ENCODE measurements at regions of chr12 and their contacts with region 1.

Region 1: GRCh38 chr12:27733052-27733656 is 22.5 kb downstream of the MRPS35 start:
- DNase-seq: peak in 2 of 10 donors; percentile 30 to 36
- H3K4me3 ChIP-seq: no peak overlapping the region
- H3K27ac ChIP-seq: no peak overlapping the region
- H3K27me3 ChIP-seq: no peaks in the 10 kb centered on the region
- CTCF ChIP-seq: peak; percentile 34 to 87 (median 75)

Region 2: GRCh38 chr12:27779920-27780611 is 46.9 kb after region 1 on chr12 and contains the starts of genes KLHL42 and MANSC4:
- intact Hi-C with region 1: loop called in 1 of 2 experiments (anchors 5 kb)
- DNase-seq: peak; percentile 40 to 81 (median 60)
- H3K4me3 ChIP-seq: peak within 1 kb of the TSS; percentile 52 to 95 (median 85)
- H3K27ac ChIP-seq: peak within 1 kb of the TSS; percentile 78 to 99 (median 96)
- H3K27me3 ChIP-seq: no peaks in the 10 kb centered on the region
- CTCF ChIP-seq: peak in 14 of 56 donors; percentile 9 to 35 (median 24)
- total RNA-seq, gene KLHL42: 40.7 to 73.4 (median 58.0) TPM
- total RNA-seq, gene MANSC4: 0.42 to 1.2 (median 0.61) TPM in 14 of 120 experiments, not detected in the others

Region 3: GRCh38 chr12:27821259-27821973 is 88.3 kb after region 1 on chr12:
- intact Hi-C with region 1: loop called (anchors 2 to 5 kb)
- DNase-seq: peak in 1 of 10 donors; percentile 14
- H3K4me3 ChIP-seq: peak overlapping the region in 13 of 59 donors; percentile 2 to 49 (median 25)
- H3K27ac ChIP-seq: no peak overlapping the region
- H3K27me3 ChIP-seq: no peaks in the 10 kb centered on the region
- CTCF ChIP-seq: peak; percentile 65 to 91 (median 82)

Region 4: DNA sequence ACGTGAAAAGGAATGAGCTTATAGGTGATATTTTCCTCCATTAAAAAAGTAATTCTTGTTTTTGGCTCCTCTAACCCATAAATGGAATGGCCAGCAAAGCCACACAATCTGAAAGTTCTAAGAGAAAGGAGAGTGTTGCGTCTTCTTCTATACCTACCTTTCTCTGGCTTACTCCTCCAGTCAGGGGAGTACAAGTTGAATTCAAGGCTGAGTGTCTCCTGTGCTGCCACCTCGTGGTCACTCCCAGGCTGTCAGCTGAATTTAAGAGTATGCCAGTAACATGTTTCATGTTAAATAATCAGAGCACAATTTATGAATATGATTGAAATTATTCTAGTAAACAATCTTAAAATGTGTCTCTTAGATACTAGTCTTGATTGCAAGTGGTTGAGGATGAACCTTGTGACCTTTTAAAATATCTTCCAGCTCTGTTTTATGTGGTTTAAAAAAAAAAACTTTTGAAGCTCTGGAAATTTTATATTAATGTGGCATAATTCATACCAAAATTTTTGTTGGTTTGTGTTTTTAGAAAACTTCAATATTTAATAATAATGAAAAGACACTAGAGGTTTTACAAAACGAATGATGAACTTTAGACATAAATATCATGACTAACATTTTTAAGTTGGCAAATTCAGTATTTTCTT is 207.7 kb after region 1 on chr12:
- intact Hi-C with region 1: loop called in 1 of 2 experiments (anchors 2 kb)
- DNase-seq: peak; percentile 53 to 81 (median 70)
- H3K4me3 ChIP-seq: no peak overlapping the region
- H3K27ac ChIP-seq: no peak overlapping the region
- H3K27me3 ChIP-seq: peaks cover 0 to 5% (median 0%) of the 10 kb centered on the region in 45 donors
- CTCF ChIP-seq: peak; percentile 43 to 87 (median 76)

Measured in dorsolateral prefrontal cortex (tissue), 120 donors.